ENCODE measurements at regions of chr5 and their contacts with region 1.

Region 1: GRCh38 chr5:683551-684481 is 9.3 kb downstream of the TPPP start:
- DNase-seq: peak in 3 of 7 donors; percentile 14 to 42 (median 21)
- H3K4me3 ChIP-seq: no peak overlapping the region
- H3K27ac ChIP-seq: no peak overlapping the region
- H3K4me1 ChIP-seq: no peaks in the 10 kb centered on the region
- H3K27me3 ChIP-seq: no peaks in the 10 kb centered on the region
- CTCF ChIP-seq: no peak
- POLR2A ChIP-seq: no peak

Region 2: DNA sequence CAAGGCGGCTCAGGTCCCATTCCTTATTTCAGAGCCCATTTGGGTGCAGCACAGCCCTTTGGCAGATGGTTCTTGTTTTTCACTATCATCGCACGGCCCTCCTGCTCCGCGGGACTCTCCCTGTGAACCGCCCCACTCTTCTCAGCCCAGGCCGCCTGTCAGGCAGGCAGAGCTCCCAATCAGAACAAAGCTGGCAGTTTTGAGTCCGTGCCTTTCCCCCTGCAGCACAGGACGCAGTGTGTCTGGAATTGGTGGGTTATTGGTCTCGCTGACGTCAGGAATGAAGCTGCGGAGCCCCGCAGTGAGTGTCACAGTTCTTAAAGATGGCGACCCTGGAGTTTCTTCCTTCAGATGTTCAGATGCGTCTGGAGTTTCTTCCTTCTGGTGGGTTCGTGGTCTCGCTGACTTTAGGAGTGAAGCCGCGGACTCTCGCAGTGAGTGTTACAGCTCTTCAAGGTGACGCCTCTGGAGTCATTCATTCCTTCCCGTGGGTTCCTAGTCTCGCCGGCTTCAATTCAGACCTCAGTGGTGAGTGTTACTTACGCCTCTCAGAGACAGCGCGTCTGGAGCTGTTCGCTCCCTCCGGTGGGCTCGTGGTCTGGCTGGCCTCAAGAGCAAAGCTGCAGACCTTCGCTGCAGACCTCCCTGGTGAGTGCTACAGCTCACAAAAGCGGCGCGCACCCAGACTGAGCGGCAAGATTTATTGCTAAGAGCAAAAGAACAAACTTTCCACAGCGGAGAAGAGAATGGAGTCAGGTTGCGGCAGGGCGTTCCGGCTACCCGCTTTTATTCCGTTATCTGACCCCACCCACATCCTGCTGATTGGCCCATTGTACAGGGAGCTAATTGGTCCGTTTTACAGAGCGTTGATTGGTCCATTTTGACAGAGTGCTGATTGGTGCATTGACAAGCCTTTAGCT is 93.2 kb after region 1 on chr5:
- intact Hi-C with region 1: loop called in 1 of 2 experiments (anchors 10 kb)
- DNase-seq: no peak
- H3K4me3 ChIP-seq: no peak overlapping the region
- H3K27ac ChIP-seq: no peak overlapping the region
- H3K4me1 ChIP-seq: no peaks in the 10 kb centered on the region
- H3K27me3 ChIP-seq: peaks cover 4% of the 10 kb centered on the region
- CTCF ChIP-seq: no peak
- POLR2A ChIP-seq: no peak

Measured in adrenal gland (tissue), 19 donors.